ENCODE measurements at regions of chr2 and their contacts with region 1.

Region 1: DNA sequence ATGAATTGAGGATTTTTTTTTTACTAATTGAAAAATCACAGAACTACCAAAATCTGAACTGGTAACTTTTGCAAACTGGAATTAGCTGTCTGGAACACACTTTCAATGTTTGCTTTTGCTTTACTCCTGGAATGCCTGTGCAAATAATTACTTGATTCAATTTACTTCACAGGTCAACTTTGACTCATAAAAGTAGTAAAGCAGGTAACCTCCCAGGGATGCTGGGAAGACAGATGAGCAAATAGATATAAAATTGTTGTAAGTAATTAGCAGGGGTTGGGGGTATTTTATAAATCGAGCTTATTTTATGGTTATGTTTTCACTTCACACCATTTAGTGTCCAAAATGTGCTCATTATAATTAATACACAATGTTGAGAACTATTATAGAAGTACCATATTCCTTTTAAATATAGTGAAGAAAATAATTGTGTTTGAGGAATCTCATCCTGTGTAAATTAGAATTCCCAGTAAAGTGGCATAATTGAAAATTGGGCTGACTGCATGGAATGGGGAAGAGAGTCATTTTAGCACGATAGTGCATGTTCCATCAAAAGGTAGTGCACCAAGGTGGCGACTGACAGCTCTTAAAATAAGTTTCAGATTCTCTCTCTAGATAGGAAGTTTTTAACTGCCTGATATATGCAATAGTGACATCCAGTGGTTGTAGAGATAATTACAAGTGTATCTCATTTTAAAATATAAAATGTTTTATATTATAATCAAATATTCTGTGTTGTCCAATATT is 398.1 kb upstream of the HNRNPA3 start:
- DNase-seq: peak; percentile 35
- ATAC-seq: no peak
- H3K4me3 ChIP-seq: no peak overlapping the region
- H3K4me3 Mint-ChIP-seq: no peak overlapping the region
- H3K27ac ChIP-seq: no peak overlapping the region
- H3K27ac Mint-ChIP-seq: no peak overlapping the region
- H3K4me1 ChIP-seq: peaks cover 0 to 3% of the 10 kb centered on the region in 2 donors
- H3K4me1 Mint-ChIP-seq: peaks cover 2% of the 10 kb centered on the region
- H3K27me3 ChIP-seq: no peaks in the 10 kb centered on the region
- H3K27me3 Mint-ChIP-seq: peaks cover 4% of the 10 kb centered on the region
- CTCF ChIP-seq: peak; percentile 86

Region 2: GRCh38 chr2:176753752-176754474 is 60.6 kb before region 1 on chr2:
- CTCF ChIA-PET with region 1: no interaction called
- POLR2A ChIA-PET with region 1: no interaction called
- intact Hi-C with region 1: no loop called
- DNase-seq: no peak
- ATAC-seq: no peak
- H3K4me3 ChIP-seq: no peak overlapping the region
- H3K4me3 Mint-ChIP-seq: no peak overlapping the region
- H3K27ac ChIP-seq: no peak overlapping the region
- H3K27ac Mint-ChIP-seq: no peak overlapping the region
- H3K4me1 ChIP-seq: no peaks in the 10 kb centered on the region
- H3K4me1 Mint-ChIP-seq: no peaks in the 10 kb centered on the region
- H3K27me3 ChIP-seq: no peaks in the 10 kb centered on the region
- H3K27me3 Mint-ChIP-seq: no peaks in the 10 kb centered on the region
- CTCF ChIP-seq: no peak

Region 3: DNA sequence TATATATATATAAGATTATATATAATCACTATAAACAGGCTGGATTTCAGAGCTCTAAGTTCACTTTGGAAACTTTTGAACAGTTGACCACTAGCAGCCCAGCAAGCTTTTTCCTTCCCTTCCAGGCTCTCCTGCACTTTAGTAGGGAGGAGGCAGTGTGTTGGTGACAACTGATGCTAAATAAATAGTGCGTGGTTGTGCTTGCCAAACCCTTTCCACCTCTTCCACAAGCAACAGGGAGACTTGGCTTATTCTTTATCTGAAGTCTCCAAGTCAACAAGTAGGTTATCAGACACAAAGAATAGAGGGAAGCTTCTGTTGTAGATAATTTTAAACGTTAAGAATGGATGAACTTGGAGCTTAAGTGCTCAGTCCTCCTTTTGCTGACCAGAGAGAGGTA is 10.1 kb before region 1 on chr2:
- CTCF ChIA-PET with region 1: interaction called, 15 read pairs
- POLR2A ChIA-PET with region 1: no interaction called
- intact Hi-C with region 1: no loop called
- DNase-seq: no peak
- ATAC-seq: no peak
- H3K4me3 ChIP-seq: no peak overlapping the region
- H3K4me3 Mint-ChIP-seq: no peak overlapping the region
- H3K27ac ChIP-seq: no peak overlapping the region
- H3K27ac Mint-ChIP-seq: no peak overlapping the region
- H3K4me1 ChIP-seq: no peaks in the 10 kb centered on the region
- H3K4me1 Mint-ChIP-seq: no peaks in the 10 kb centered on the region
- H3K27me3 ChIP-seq: no peaks in the 10 kb centered on the region
- H3K27me3 Mint-ChIP-seq: no peaks in the 10 kb centered on the region
- CTCF ChIP-seq: no peak

Measured in B cell (primary cell).